GM10248 (cell line): ENCODE measurements at regions of chr5 and their contacts with region 1.

Region 1: DNA sequence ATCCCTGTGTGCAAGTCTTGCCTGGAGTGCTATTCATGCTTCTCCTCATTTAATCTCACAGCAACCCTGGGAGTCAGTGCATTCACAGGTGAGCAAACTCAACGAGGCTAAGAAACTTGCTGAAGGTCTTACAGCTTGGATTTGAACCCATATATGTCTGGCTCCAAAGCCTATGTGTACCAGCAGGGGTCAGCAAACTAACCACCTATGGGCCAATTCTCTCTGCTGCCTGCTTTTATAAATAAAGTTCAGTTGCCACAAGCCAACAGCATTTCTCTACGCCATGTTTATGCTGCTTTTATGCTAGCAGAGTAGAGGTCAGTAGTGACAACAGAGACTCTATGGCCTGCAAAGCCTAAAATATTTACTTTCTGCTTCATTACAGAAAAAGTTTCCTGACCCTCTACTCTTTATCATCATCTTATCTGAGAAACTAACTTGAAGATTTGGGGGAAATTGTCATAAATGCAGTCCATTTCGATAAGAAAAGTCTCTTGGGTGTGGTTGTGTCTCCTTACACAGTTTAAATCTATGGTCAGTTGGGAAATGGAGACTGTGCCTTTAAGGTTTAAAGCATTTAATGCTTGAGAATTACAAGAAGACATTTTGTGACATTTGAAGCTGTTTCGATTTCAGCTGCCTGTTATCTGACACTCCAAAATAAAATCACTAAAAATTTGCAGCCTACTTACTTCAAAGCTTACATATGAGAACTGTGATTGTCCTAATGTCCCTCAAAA is 137.7 kb downstream of the PRELID2 start:
- DNase-seq: peak; percentile 25
- CTCF ChIP-seq: peak; percentile 48

Region 2: DNA sequence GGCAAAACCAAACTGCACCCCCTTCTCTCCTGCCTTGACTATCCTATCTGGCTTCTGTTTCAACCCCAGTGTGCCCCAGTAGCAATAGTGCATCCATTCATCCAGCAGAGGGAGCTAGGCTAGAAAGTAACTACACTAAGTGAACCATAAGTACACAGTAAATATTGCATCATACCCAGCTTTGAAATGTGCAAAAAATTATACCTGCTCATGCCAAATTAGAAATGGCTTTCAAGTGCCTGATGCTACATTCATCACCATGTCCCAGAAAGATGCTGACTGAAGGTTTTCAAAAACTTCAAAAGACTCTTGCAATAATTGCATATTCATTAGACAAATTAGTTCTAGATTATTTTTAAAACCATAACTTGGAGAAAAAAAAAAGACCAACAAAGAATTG is 15.7 kb before region 1 on chr5:
- CTCF ChIA-PET with region 1: interaction called, 40 read pairs
- POLR2A ChIA-PET with region 1: no interaction called
- DNase-seq: peak; percentile 49
- CTCF ChIP-seq: peak; percentile 64

Region 3: DNA sequence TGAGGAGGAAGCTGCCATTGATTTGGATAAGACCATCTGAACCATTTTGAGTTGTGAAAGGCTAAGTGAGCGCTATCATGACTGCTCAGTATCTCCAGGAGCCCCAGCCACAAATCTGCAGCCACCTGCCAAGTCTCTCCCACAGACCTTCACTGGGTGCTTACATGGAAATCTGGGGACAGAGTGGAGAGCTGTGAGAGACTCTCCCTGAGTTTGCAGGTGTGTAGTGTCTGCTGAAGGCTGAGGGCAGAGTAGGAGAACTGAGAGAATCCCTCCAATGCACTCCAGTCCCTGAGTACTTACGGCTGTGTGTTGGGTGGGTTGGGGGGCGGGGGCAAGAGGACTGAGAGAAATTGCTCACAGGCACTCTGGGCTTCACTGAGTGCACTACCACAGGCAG is 14.0 kb after region 1 on chr5:
- CTCF ChIA-PET with region 1: interaction called, 54 read pairs
- POLR2A ChIA-PET with region 1: no interaction called
- DNase-seq: no peak
- CTCF ChIP-seq: no peak

Region 4: GRCh38 chr5:145775893-145776444 is 78.5 kb after region 1 on chr5:
- CTCF ChIA-PET with region 1: no interaction called
- POLR2A ChIA-PET with region 1: no interaction called
- DNase-seq: no peak
- CTCF ChIP-seq: no peak

Region 5: DNA sequence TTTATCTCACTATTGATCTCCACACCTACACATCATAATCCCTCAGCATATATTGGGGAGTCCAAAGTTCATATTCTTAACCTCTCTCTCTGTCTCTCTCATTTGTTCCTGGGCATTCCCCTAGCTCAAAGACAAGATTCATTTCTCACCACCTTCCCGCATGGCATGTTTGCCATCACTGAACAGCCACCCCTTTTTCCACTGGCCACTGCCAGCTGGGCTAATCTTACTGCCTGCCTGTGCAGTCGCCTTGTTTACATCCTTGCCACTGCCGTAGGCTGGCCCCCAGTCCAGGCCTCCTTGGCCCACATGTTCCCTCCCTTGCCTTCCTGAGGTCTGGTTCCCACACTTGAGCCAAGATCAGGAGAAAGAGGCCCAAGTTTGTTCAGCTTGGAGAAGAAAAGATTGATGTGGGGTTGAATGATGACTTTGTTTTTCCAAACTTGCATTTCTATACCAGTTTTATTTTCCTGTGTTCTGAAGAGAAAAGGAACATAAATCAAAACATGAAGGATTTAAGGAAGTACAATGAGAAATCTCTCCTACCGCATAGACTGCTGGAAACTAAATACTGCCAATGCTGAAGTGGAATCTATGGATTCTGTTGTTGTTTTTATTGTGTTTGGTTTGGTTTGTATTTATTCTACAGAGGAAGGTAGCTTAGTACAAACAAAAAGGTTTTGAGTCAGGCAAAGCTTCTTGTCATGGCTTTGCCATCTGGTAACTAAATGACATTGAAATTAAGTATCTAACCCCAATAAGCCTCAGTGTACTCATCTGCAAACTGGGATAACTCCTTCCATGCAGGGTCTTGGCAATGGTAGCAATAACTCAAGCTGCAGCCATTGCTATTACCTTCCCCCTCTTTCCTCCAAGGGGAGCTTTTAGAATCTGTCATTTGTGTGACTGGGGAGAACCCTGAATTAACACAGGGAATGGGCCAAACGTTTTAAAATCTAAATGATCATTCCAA is 328.0 kb after region 1 on chr5:
- CTCF ChIA-PET with region 1: no interaction called
- POLR2A ChIA-PET with region 1: no interaction called
- DNase-seq: no peak
- CTCF ChIP-seq: no peak